Adrenal gland (tissue), 19 donors: ENCODE measurements at regions of chr9 and their contacts with region 1.

Region 1: DNA sequence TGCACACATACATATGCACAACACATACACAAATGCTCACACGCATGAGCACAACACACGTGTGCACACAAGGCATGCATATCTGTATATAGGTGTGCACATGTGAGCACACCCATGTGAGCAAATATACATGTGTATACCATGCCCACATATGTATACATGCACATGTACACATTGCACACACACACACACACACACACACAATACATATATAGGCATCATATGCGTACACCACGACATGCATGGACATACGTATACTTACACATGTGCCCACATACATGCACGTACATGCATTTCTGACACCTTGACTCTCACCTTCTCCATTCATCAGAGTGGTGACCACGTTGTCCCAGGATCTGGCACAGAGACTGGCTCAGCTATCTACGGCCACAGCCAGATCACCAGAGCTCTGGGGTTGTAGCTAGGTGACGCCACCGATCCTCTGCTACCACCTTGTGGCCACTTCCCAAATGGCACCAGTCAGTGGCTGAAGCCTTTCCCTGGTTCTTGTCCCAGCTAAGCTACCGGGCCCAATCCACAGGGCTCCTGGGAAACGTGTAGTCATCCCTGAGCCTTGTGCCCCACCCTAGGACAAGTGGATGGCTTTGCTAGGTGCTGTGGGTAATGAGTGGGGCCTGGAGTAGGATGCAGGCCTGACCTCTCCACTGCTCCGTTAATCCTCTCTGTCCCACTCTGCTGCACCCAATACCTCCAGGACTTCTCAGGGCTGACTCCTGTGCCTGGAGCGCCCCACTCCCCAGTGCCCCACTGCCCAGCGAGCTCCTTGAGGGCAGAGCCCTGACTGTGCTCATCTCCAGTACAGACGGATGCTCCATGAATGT is 194.4 kb downstream of the RGS3 start:
- DNase-seq: peak; percentile 85 to 96 (median 92)
- H3K4me3 ChIP-seq: no peak overlapping the region
- H3K27ac ChIP-seq: no peak overlapping the region
- H3K4me1 ChIP-seq: peaks cover 3 to 16% of the 10 kb centered on the region in 2 donors
- H3K27me3 ChIP-seq: no peaks in the 10 kb centered on the region
- CTCF ChIP-seq: peak; percentile 95 to 99 (median 98)
- POLR2A ChIP-seq: no peak

Region 2: GRCh38 chr9:113446323-113446740 is 211.6 kb before region 1 on chr9:
- intact Hi-C with region 1: loop called (anchors 2 to 5 kb)
- DNase-seq: peak in 2 of 7 donors; percentile 10 to 19
- H3K4me3 ChIP-seq: no peak overlapping the region
- H3K27ac ChIP-seq: no peak overlapping the region
- H3K4me1 ChIP-seq: no peaks in the 10 kb centered on the region
- H3K27me3 ChIP-seq: no peaks in the 10 kb centered on the region
- CTCF ChIP-seq: peak; percentile 41 to 85 (median 72)
- POLR2A ChIP-seq: no peak

Region 3: DNA sequence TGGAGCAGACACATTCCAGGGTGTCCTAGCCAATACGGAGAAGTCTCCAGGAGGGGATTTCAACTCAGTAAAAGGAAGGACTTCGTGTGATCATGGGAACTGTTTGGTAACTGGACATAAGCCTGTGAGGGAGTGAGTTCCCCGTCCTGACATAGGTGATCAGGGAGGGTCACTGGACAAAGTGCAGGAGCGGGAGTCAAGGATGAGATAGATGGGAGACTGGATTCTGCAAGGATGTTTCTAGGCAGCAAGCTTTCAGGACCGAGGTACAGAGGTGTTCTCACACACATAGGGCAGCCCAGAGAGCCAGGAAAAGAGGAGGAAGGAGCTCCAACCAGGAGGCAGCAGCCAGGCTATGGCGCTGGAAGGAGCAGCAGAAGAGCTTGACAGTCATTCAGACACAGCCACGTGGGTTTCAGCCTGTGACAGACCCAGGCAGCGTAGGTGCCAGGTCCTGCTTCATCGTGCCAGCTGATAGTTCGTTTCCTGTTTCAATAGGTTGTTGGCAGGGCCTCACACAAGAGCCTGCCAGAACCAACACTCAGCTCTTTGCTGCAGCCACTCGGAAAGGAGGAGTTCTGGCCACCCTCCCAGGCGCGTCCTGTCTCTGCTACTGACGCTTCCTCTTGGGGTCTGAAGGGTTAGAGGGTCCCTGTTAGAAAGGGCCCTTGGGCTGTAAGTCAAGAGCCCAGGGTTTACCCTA is 336.1 kb after region 1 on chr9:
- intact Hi-C with region 1: no loop called
- DNase-seq: peak; percentile 84 to 97 (median 95)
- H3K4me3 ChIP-seq: no peak overlapping the region
- H3K27ac ChIP-seq: peak overlapping the region in 3 of 5 donors; percentile 25 to 54 (median 45)
- H3K4me1 ChIP-seq: peaks cover 37 to 44% of the 10 kb centered on the region in 2 donors
- H3K27me3 ChIP-seq: no peaks in the 10 kb centered on the region
- CTCF ChIP-seq: peak in 1 of 6 experiments; percentile 7
- POLR2A ChIP-seq: peak in 1 of 2 donors; percentile 42